Activated CD8-positive, alpha-beta T cell treated with anti-CD3 and anti-CD28 coated beads, Interleukin-2, amount 10 ng/mL, durations not matched to agents 7 days and 5 days (primary cell): ENCODE measurements at regions of chr6 and their contacts with region 1.

Region 1: GRCh38 chr6:90403489-90404381 is 107.1 kb upstream of the BACH2 start:
- DNase-seq: no peak
- ATAC-seq: no peak
- H3K4me3 Mint-ChIP-seq: no peak overlapping the region
- H3K27ac Mint-ChIP-seq: peak overlapping the region; percentile 85
- H3K4me1 Mint-ChIP-seq: peaks cover 75% of the 10 kb centered on the region
- H3K27me3 Mint-ChIP-seq: no peaks in the 10 kb centered on the region

Region 2: DNA sequence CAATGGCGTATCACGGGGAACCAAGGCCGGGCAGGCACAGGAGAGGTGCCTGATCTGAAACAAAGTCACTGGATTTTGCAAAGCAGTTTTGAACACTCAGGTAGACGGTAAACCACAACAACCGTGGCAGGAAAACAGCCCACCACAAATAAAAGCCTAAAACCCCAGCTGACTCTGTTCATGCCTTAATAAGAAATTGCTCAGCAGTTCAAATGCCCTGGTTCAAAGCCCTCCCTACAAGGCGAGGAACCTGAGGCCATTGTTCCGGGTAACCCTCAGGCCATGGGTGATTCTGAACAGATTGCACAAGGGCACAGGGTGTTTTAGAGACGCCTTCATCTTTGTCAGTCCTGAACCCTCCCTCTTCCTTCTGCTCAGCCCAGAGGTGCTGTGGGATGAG is 69.0 kb after region 1 on chr6:
- CTCF ChIA-PET with region 1: interaction called, 170 read pairs
- POLR2A ChIA-PET with region 1: interaction called, 29 read pairs
- DNase-seq: peak; percentile 76
- ATAC-seq: peak; percentile 49
- H3K4me3 Mint-ChIP-seq: peak overlapping the region; percentile 24
- H3K27ac Mint-ChIP-seq: peak overlapping the region; percentile 62
- H3K4me1 Mint-ChIP-seq: peaks cover 91% of the 10 kb centered on the region
- H3K27me3 Mint-ChIP-seq: peaks cover 3% of the 10 kb centered on the region

Region 3: GRCh38 chr6:90574610-90575009 is 170.9 kb after region 1 on chr6:
- CTCF ChIA-PET with region 1: no interaction called
- POLR2A ChIA-PET with region 1: no interaction called
- DNase-seq: no peak
- ATAC-seq: no peak
- H3K4me3 Mint-ChIP-seq: no peak overlapping the region
- H3K27ac Mint-ChIP-seq: no peak overlapping the region
- H3K4me1 Mint-ChIP-seq: peaks cover 1% of the 10 kb centered on the region
- H3K27me3 Mint-ChIP-seq: no peaks in the 10 kb centered on the region